Keratinocyte (primary cell): ENCODE measurements at regions of chr16 and their contacts with region 1.

Region 1: DNA sequence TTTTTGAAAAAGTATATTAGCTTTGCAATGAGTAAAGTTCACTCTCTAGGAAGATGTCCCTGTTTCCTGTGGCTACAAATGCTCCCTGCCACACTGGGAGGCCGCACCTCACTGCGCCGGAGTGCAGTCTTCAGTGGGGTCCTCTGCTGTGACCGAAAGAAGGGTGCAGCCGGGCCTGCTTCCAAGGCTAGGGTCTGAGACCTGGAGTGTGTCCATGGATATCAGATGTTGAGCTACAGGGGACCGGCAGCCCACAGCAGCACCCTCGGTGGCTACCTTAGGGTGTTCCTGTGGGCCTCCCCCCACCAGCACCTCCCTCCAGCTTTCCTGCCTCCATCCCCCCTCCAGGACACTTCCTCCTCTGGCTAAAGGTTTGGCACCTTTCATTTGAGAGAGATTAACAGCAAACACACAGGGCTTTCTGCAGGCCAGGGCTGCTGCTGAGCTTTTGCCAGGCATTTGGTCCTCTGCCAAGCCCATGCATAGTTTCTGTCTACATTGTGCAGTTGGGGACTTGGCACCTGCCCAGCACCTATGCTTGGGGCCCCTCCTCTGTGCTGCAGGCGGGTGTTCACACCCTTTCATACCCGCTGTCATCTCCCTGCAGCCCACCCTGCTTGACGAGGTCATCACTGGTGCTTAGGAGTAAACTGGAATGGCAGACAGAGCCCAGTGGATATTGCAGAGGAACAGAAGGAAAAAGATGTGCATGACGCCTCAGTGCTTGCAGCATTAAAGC is 33.8 kb upstream of the CRISPLD2 start:
- DNase-seq: no peak
- H3K4me3 ChIP-seq: no peak overlapping the region
- H3K27ac ChIP-seq: no peak overlapping the region
- H3K4me1 ChIP-seq: no peaks in the 10 kb centered on the region
- H3K27me3 ChIP-seq: no peaks in the 10 kb centered on the region
- CTCF ChIP-seq: no peak

Region 2: GRCh38 chr16:84544031-84544773 is 241.8 kb before region 1 on chr16:
- dilution Hi-C with region 1: no loop called
- DNase-seq: no peak
- H3K4me3 ChIP-seq: no peak overlapping the region
- H3K27ac ChIP-seq: no peak overlapping the region
- H3K4me1 ChIP-seq: no peaks in the 10 kb centered on the region
- H3K27me3 ChIP-seq: peaks cover 6% of the 10 kb centered on the region
- CTCF ChIP-seq: no peak

Region 3: GRCh38 chr16:84970447-84971127 is 184.6 kb after region 1 on chr16:
- dilution Hi-C with region 1: loop called (anchors 10 kb)
- DNase-seq: peak; percentile 32
- H3K4me3 ChIP-seq: no peak overlapping the region
- H3K27ac ChIP-seq: no peak overlapping the region
- H3K4me1 ChIP-seq: no peaks in the 10 kb centered on the region
- H3K27me3 ChIP-seq: no peaks in the 10 kb centered on the region
- CTCF ChIP-seq: peak; percentile 91 to 95 (median 95)